Colonic mucosa (tissue), 4 donors: ENCODE measurements at regions of chr7 and their contacts with region 1.

Region 1: GRCh38 chr7:25216837-25217236 is 11.4 kb downstream of the NPVF start:
- DNase-seq: no peak
- H3K4me3 ChIP-seq: no peak overlapping the region
- H3K27ac ChIP-seq: no peak overlapping the region
- H3K4me1 ChIP-seq: no peaks in the 10 kb centered on the region
- H3K27me3 ChIP-seq: no peaks in the 10 kb centered on the region
- CTCF ChIP-seq: peak; percentile 79

Region 2: GRCh38 chr7:25179771-25180591 is 36.9 kb before region 1 on chr7:
- intact Hi-C with region 1: loop called (anchors 5 kb)
- DNase-seq: peak; percentile 97
- H3K4me3 ChIP-seq: peak overlapping the region; percentile 55
- H3K27ac ChIP-seq: peak overlapping the region; percentile 46
- H3K4me1 ChIP-seq: peaks cover 3% of the 10 kb centered on the region
- H3K27me3 ChIP-seq: no peaks in the 10 kb centered on the region
- CTCF ChIP-seq: peak; percentile 82